Right lobe of liver (tissue), 6 donors: ENCODE measurements at regions of chr16 and their contacts with region 1.

Region 1: GRCh38 chr16:27169511-27170071 is 33.7 kb upstream of the KDM8 start:
- DNase-seq: peak in 1 of 3 donors; percentile 32
- ATAC-seq: peak; percentile 74 to 82 (median 78)
- H3K4me3 ChIP-seq: no peak overlapping the region
- H3K27ac ChIP-seq: no peak overlapping the region
- H3K4me1 ChIP-seq: no peaks in the 10 kb centered on the region
- H3K27me3 ChIP-seq: no peaks in the 10 kb centered on the region
- CTCF ChIP-seq: peak in 3 of 4 donors; percentile 25 to 46 (median 26)
- POLR2A ChIP-seq: no peak

Region 2: GRCh38 chr16:27097800-27098230 is 71.8 kb before region 1 on chr16:
- intact Hi-C with region 1: no loop called
- DNase-seq: no peak
- ATAC-seq: no peak
- H3K4me3 ChIP-seq: no peak overlapping the region
- H3K27ac ChIP-seq: no peak overlapping the region
- H3K4me1 ChIP-seq: no peaks in the 10 kb centered on the region
- H3K27me3 ChIP-seq: no peaks in the 10 kb centered on the region
- CTCF ChIP-seq: no peak
- POLR2A ChIP-seq: no peak

Region 3: GRCh38 chr16:27461483-27462171 is 292.0 kb after region 1 on chr16:
- intact Hi-C with region 1: loop called in 1 of 2 experiments (anchors 10 kb)
- DNase-seq: no peak
- ATAC-seq: peak in 1 of 4 donors; percentile 2
- H3K4me3 ChIP-seq: no peak overlapping the region
- H3K27ac ChIP-seq: no peak overlapping the region
- H3K4me1 ChIP-seq: no peaks in the 10 kb centered on the region
- H3K27me3 ChIP-seq: no peaks in the 10 kb centered on the region
- CTCF ChIP-seq: no peak
- POLR2A ChIP-seq: no peak